Caco-2 (cell line): ENCODE measurements at regions of chr13 and their contacts with region 1.

Region 1: DNA sequence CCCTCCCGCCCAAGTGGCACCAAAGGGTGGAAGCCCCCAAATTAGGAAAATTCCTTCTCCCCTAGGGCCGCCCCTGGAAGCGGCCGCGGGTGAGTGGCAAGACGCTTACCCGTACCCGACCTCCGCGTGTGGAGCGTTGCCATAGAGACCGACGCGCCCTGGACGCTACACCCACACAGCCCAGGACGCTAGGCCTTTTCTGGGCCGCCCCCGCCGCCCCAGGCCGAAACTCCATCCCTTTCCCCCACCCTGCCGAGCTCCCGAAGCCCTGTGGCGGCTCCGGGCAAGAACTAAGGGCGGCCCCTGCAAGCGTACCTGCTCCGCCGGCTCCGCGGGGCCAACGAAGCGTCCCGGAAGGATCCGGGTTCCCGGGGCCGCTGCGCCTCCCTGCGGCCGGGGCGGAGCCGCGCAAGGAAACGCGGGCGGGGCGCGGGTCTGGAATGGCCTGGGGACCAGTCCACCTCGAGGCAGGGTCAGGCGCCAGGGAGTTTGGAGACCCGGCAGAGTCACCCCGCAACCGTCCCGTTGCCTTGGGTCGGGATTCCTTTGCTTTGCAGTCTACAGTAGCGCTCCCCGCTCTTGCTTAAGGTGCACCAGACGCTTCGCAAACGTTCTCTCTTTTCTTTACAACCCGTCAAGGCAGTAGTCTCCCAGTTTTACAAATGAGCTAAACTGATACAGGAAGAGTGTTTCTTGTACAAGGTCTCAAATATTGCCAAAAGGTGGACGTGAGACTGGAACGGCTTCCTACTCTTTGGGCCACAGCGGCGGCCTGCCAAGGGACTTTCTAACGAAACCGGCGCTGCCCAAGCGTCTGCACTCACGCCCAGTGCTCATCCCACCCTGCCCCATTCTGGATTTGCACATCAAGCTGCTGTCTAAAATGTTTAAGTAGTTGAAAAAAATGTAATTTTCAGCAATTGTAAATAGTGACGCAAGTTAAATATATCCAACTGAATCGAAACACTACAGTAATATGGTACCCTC is at the start of gene NEK5:
- DNase-seq: peak; percentile 72 to 92
- H3K4me3 ChIP-seq: peak within 1 kb of the TSS; percentile 88
- H3K4me3 Mint-ChIP-seq: peak within 1 kb of the TSS; percentile 74
- H3K27ac Mint-ChIP-seq: peak within 1 kb of the TSS; percentile 50
- H3K4me1 ChIP-seq: peaks cover 3% of the 10 kb centered on the region; the same call in 1 of the 2 replicates
- H3K4me1 Mint-ChIP-seq: peaks cover 9% of the 10 kb centered on the region
- H3K27me3 ChIP-seq: no peaks in the 10 kb centered on the region
- H3K27me3 Mint-ChIP-seq: no peaks in the 10 kb centered on the region
- CTCF ChIP-seq: peak; percentile 87 to 91
- total RNA-seq, gene NEK5: 0.35 and 0.39 TPM in 2 replicates

Region 2: GRCh38 chr13:51814825-51815650 is 314.0 kb before region 1 on chr13:
- CTCF ChIA-PET with region 1: interaction called, 11 read pairs
- POLR2A ChIA-PET with region 1: no interaction called
- intact Hi-C with region 1: loop called (anchors 1 kb)
- DNase-seq: peak; percentile 68 to 80
- H3K4me3 ChIP-seq: no peak overlapping the region
- H3K4me3 Mint-ChIP-seq: peak overlapping the region; percentile 62
- H3K27ac Mint-ChIP-seq: no peak overlapping the region
- H3K4me1 ChIP-seq: no peaks in the 10 kb centered on the region
- H3K4me1 Mint-ChIP-seq: peaks cover 14% of the 10 kb centered on the region
- H3K27me3 ChIP-seq: no peaks in the 10 kb centered on the region
- H3K27me3 Mint-ChIP-seq: peaks cover 19% of the 10 kb centered on the region
- CTCF ChIP-seq: peak; percentile 83 to 88

Region 3: DNA sequence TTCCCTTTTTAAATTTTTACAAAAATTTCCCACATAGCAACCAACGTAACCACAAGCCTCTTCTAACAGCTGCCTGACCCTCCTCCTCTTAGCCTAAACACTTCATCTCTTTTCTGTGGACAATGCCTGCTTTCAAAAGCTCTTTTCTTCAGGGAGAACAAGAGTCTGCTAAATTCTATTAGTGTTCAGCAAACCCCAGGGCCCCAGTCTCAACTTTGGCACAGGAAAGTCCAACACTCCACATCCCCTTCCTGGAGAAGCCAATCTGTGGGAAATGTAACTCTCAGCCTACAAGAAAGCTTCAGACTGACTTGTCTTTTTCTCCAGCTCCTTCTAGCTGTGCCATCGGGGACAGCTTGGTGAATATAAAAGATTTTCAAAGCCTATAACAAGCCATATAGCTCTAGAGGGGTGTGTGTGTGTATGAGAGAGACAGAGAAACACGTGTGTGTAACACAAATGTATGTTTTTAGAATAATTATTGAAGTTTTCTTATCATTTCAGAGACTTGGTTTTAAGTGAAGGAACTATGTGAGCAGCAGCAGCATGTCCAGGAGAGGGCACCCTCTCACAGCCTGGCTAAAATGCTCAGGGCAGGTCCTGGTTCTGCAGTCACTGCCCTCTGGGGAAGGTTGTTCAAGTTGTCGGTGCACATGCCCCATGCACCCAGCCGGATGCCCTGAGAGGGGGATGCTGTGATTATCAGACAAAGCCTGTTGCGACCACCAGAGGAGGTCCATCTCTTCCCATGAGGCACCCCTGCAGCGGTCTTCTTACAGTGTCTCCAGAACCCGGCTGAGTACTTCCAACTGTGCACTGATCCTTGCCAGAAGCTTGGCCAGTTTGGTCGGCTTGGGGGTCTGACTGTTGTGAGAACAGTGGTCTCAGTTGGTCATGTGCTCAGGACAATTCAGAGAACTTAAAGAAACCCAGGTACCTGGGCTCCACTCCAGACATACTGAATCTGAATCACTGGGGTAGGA is 232.8 kb before region 1 on chr13:
- CTCF ChIA-PET with region 1: interaction called, 34 read pairs
- POLR2A ChIA-PET with region 1: no interaction called
- intact Hi-C with region 1: loop called (anchors 1 kb)
- DNase-seq: peak; percentile 66 to 75
- H3K4me3 ChIP-seq: no peak overlapping the region
- H3K4me3 Mint-ChIP-seq: no peak overlapping the region
- H3K27ac Mint-ChIP-seq: no peak overlapping the region
- H3K4me1 ChIP-seq: no peaks in the 10 kb centered on the region
- H3K4me1 Mint-ChIP-seq: peaks cover 8% of the 10 kb centered on the region
- H3K27me3 ChIP-seq: no peaks in the 10 kb centered on the region
- H3K27me3 Mint-ChIP-seq: no peaks in the 10 kb centered on the region
- CTCF ChIP-seq: peak; percentile 76 to 89

Region 4: GRCh38 chr13:51935326-51936201 is 193.4 kb before region 1 on chr13:
- CTCF ChIA-PET with region 1: interaction called, 6 read pairs
- POLR2A ChIA-PET with region 1: no interaction called
- intact Hi-C with region 1: loop called (anchors 1 kb)
- DNase-seq: peak; percentile 47 to 56
- H3K4me3 ChIP-seq: no peak overlapping the region
- H3K4me3 Mint-ChIP-seq: no peak overlapping the region
- H3K27ac Mint-ChIP-seq: no peak overlapping the region
- H3K4me1 ChIP-seq: no peaks in the 10 kb centered on the region
- H3K4me1 Mint-ChIP-seq: no peaks in the 10 kb centered on the region
- H3K27me3 ChIP-seq: no peaks in the 10 kb centered on the region
- H3K27me3 Mint-ChIP-seq: no peaks in the 10 kb centered on the region
- CTCF ChIP-seq: peak; percentile 56 to 73

Region 5: DNA sequence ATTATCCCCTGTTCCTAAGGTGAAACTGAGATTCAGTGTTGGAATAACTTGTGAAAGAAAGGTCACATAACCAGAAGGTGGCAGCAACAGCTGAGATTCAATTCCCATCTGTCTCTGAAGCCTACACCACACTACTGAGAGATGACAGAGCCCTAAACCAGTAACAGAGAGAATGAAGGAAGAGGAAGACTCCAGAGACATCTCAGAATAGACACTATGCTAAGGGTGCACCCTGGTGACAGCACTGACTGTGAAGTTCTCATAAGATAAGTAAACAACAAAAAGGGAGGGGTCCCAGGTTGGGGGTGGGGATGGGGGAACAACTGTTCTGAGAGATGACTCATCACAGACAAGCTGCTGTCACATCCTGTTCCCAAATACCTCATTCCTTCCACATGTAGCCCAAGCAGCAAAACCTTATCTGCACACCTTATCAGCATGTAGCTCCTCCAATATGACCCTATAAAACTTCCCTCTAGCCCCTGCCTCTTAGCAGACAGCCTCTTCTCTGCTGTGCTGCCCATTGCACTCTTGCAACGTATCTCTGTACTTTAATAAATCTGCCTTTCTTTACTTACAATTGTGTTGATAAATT is 58.0 kb before region 1 on chr13:
- CTCF ChIA-PET with region 1: interaction called, 10 read pairs
- POLR2A ChIA-PET with region 1: no interaction called
- intact Hi-C with region 1: loop called (anchors 2 kb)
- DNase-seq: peak in 1 of 2 experiments; percentile 22
- H3K4me3 ChIP-seq: no peak overlapping the region
- H3K4me3 Mint-ChIP-seq: no peak overlapping the region
- H3K27ac Mint-ChIP-seq: no peak overlapping the region
- H3K4me1 ChIP-seq: peaks cover 3% of the 10 kb centered on the region; the same call in 1 of the 2 replicates
- H3K4me1 Mint-ChIP-seq: no peaks in the 10 kb centered on the region
- H3K27me3 ChIP-seq: no peaks in the 10 kb centered on the region
- H3K27me3 Mint-ChIP-seq: no peaks in the 10 kb centered on the region
- CTCF ChIP-seq: no peak

Region 6: GRCh38 chr13:52371736-52372247 is 242.8 kb after region 1 on chr13:
- CTCF ChIA-PET with region 1: no interaction called
- POLR2A ChIA-PET with region 1: no interaction called
- intact Hi-C with region 1: no loop called
- DNase-seq: peak in 1 of 2 experiments; percentile 8
- H3K4me3 ChIP-seq: no peak overlapping the region
- H3K4me3 Mint-ChIP-seq: no peak overlapping the region
- H3K27ac Mint-ChIP-seq: no peak overlapping the region
- H3K4me1 ChIP-seq: peaks cover 17% of the 10 kb centered on the region
- H3K4me1 Mint-ChIP-seq: peaks cover 17% of the 10 kb centered on the region
- H3K27me3 ChIP-seq: no peaks in the 10 kb centered on the region
- H3K27me3 Mint-ChIP-seq: no peaks in the 10 kb centered on the region
- CTCF ChIP-seq: no peak